H1 (cell line): ENCODE measurements at regions of chr3 and their contacts with region 1.

Region 1: DNA sequence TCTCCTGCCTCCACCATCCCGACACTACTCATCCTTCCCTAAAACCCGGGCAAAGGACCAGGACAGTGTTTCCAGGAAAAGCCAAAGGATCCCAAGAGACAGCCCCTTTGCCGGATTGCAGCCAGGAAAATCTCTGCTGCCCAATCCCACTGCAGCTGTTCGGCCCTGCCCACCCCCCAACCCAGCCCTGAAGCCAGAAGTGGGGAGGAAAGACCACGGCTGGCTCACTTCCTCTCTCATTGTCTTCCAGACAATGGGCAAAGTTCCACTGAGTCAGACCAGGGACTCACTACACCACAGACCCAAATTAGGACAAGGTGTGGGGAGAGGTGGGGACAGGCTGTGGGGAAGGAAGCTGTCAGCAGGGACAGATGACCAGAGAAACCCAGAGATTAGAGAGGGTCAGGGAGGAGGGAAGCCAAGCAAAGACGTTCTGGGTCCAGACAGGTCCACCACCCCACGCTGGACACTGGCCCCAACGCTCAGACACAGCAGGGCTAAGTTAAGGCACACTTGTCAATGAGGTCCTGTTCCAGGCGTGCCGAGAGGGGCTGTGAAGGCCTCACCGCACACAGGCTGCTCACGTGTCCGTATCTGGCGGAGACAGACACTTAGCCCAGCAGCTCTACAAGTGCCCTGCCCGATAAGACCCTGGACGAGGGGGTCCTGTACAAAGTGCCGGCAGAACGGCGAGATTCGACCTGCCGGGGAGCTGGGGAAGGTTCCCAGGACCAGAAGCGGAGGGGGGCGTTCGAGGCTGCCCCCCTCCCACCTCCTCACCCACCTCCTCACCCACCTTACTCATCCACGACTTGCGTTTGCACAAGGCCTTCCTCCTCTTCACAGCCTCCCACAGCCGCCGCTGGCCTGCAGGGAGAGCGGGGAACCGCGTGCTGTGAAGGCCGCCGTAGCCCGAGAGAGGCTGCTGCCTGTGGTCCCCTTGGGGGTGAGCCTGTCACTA is 21.9 kb downstream of the TNK2 start:
- DNase-seq: no peak
- H3K4me3 ChIP-seq: no peak overlapping the region
- H3K27ac ChIP-seq: no peak overlapping the region
- H3K4me1 ChIP-seq: peaks cover 1 to 20% (median 8%) of the 10 kb centered on the region in 4 experiments; a peak in 6 of 7 replicates
- H3K27me3 ChIP-seq: no peaks in the 10 kb centered on the region
- CTCF ChIP-seq: no peak
- EP300 ChIP-seq: no peak
- POLR2A ChIP-seq: no peak
- RAD21 ChIP-seq: no peak

Region 2: GRCh38 chr3:195907934-195908693 is 21.7 kb after region 1 on chr3 and contains the start of gene TNK2:
- CTCF ChIA-PET with region 1: interaction called, 59 read pairs
- POLR2A ChIA-PET with region 1: no interaction called
- DNase-seq: peak in 1 of 2 experiments; percentile 75
- H3K4me3 ChIP-seq: peak within 1 kb of the TSS; percentile 69 to 79 (median 74)
- H3K27ac ChIP-seq: no peak within 1 kb of the TSS
- H3K4me1 ChIP-seq: peaks cover 7 to 20% (median 16%) of the 10 kb centered on the region in 4 experiments; a peak in 6 of 7 replicates
- H3K27me3 ChIP-seq: peaks cover 0 to 15% (median 5%) of the 10 kb centered on the region in 4 experiments; a peak in 5 of 7 replicates
- CTCF ChIP-seq: no peak
- EP300 ChIP-seq: no peak
- POLR2A ChIP-seq: no peak
- RAD21 ChIP-seq: no peak
- total RNA-seq, gene TNK2: 33.9 and 38.6 TPM in 2 replicates

Region 3: DNA sequence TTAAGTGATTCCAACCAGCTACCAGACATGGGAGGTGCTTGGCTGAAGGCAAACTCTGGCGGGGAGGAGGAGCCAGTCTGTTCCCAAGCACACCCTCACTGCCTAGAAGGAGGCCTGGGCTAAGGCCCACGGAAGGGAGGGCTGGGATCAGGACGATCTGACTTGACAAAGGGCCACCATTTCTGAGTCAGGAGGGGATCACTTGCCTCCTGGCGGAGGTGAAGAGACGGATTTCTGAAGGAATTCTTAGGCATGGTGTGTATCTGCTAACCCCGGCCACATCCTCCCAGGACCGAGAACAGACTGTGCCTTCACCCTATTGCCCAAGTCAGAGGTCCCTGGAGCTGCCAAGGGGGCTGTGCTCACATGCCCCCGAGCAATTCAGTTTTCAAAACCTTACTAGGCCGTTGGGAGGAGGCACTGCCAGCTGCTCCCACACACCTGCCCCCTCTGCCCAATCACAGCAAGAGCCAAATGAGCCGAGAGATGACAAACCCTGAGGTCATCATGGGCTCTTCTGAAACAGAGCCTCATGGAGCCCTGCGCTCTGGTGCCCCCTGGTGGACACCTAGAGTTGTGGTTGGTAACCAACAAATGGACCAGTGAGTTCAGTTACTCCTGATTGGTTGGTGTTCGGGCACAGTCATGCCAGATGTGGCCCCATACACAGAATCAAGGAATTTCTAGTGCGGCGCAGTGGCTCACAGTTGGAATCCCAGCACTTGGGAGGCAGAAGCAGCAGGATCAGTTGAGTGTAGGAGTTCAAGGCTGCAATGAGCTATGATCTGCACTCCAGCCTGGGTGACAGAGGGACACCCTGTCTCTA is 28.4 kb after region 1 on chr3:
- CTCF ChIA-PET with region 1: interaction called, 59 read pairs
- POLR2A ChIA-PET with region 1: interaction called, 3 read pairs
- DNase-seq: peak; percentile 97
- H3K4me3 ChIP-seq: peak overlapping the region in 2 of 4 experiments; percentile 14 to 31; a peak in 2 of 8 replicates
- H3K27ac ChIP-seq: peak overlapping the region; percentile 57
- H3K4me1 ChIP-seq: peaks cover 7 to 13% (median 11%) of the 10 kb centered on the region in 4 experiments
- H3K27me3 ChIP-seq: peaks cover 0 to 6% (median 4%) of the 10 kb centered on the region in 4 experiments; a peak in 4 of 7 replicates
- CTCF ChIP-seq: peak in 2 of 3 experiments; percentile 93 to 99; a peak in 3 of 4 replicates
- EP300 ChIP-seq: no peak
- POLR2A ChIP-seq: peak in 1 of 2 experiments; percentile 70; a peak in 1 of 3 replicates
- RAD21 ChIP-seq: peak; percentile 80 to 88

Region 4: DNA sequence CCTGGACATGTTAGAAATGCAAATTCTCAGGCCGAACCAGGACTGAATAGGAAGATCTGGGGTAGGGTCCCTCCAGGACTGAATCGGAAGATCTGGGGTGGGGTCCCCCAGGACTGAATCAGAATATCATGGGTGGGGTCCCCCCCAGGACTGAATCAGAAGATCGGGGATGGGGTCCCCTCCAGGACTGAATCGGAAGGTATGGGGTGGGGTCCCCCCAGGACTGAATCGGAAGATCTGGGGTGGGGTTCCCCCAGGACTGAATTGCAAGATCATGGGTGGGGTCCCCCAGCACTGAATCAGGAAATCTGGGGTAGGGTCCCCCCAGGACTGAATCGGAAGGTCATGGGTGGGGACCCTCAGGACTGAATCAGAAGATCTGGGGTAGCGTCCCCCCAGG is 70.1 kb after region 1 on chr3:
- CTCF ChIA-PET with region 1: no interaction called
- POLR2A ChIA-PET with region 1: no interaction called
- DNase-seq: no peak
- H3K4me3 ChIP-seq: no peak overlapping the region
- H3K27ac ChIP-seq: no peak overlapping the region
- H3K4me1 ChIP-seq: peaks cover 0 to 3% (median under 1%) of the 10 kb centered on the region in 4 experiments; a peak in 3 of 7 replicates
- H3K27me3 ChIP-seq: no peaks in the 10 kb centered on the region
- CTCF ChIP-seq: no peak
- EP300 ChIP-seq: no peak
- POLR2A ChIP-seq: no peak
- RAD21 ChIP-seq: no peak

Region 5: GRCh38 chr3:196073188-196073838 is 186.9 kb after region 1 on chr3:
- CTCF ChIA-PET with region 1: no interaction called
- POLR2A ChIA-PET with region 1: no interaction called
- DNase-seq: peak in 1 of 2 experiments; percentile 69
- H3K4me3 ChIP-seq: no peak overlapping the region
- H3K27ac ChIP-seq: no peak overlapping the region
- H3K4me1 ChIP-seq: no peaks in the 10 kb centered on the region
- H3K27me3 ChIP-seq: no peaks in the 10 kb centered on the region
- CTCF ChIP-seq: peak; percentile 81 to 87 (median 85)
- EP300 ChIP-seq: no peak
- POLR2A ChIP-seq: no peak
- RAD21 ChIP-seq: peak; percentile 93 to 94